Activated CD4-positive, alpha-beta memory T cell treated with anti-CD3 and anti-CD28 coated beads for 36 hours (primary cell): ENCODE measurements at regions of chr16 and their contacts with region 1.

Region 1: GRCh38 chr16:30657866-30658730 is at the start of gene FBRS:
- DNase-seq: peak; percentile 100
- H3K4me3 Mint-ChIP-seq: peak within 1 kb of the TSS; percentile 96
- H3K27ac Mint-ChIP-seq: peak within 1 kb of the TSS; percentile 100
- H3K4me1 Mint-ChIP-seq: peaks cover 38% of the 10 kb centered on the region
- H3K27me3 Mint-ChIP-seq: no peaks in the 10 kb centered on the region
- total RNA-seq, gene FBRS: 91.8 to 95.6 TPM

Region 2: GRCh38 chr16:30557957-30558788 is 99.9 kb before region 1 on chr16 and contains the start of gene ZNF764:
- CTCF ChIA-PET with region 1: no interaction called
- POLR2A ChIA-PET with region 1: no interaction called
- intact Hi-C with region 1: loop called (anchors 1 kb)
- DNase-seq: peak; percentile 99
- H3K4me3 Mint-ChIP-seq: peak within 1 kb of the TSS; percentile 89
- H3K27ac Mint-ChIP-seq: peak within 1 kb of the TSS; percentile 96
- H3K4me1 Mint-ChIP-seq: peaks cover 38% of the 10 kb centered on the region
- H3K27me3 Mint-ChIP-seq: no peaks in the 10 kb centered on the region
- total RNA-seq, gene ZNF764: 13.7 to 14.2 TPM

Region 3: GRCh38 chr16:30628627-30629540 is 29.2 kb before region 1 on chr16:
- CTCF ChIA-PET with region 1: interaction called, 8 read pairs
- POLR2A ChIA-PET with region 1: interaction called, 9 read pairs
- intact Hi-C with region 1: loop called (anchors 1 kb)
- DNase-seq: peak; percentile 94
- H3K4me3 Mint-ChIP-seq: peak overlapping the region; percentile 60
- H3K27ac Mint-ChIP-seq: peak overlapping the region; percentile 57
- H3K4me1 Mint-ChIP-seq: peaks cover 4% of the 10 kb centered on the region
- H3K27me3 Mint-ChIP-seq: no peaks in the 10 kb centered on the region

Region 4: DNA sequence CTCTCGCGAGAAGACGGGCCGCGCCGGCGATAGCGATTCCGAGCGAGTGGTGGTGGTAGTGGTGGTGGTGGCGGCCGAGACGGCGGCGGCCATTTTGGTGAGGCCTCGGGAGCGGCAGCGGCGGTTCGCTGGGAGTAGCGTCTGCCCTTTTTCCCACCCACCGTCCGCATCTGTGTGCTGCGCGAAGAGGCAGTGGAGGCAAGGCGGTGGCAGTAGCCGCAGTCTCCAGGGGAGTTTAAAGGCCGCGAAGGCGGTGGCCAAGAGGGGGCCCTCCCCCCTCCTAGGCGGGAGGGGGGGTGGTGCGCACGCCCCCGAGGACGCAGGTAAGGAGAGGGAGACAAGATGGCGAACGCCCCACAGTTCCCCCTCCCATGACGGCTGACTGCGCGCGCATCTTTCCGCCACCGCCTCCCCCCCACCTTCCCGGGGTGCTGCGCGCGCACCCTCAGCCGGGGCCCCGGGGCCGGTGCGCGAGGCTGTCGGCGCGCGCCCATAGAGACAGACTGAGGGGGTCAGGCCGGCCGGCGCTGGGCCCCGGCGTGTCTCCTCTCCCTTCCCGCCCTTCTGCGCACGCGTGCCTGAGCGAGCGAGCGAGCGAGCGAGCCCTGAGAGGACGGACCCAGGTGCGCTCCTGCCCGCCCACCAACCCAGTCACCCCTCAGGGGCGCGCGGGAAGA is 40.2 kb after region 1 on chr16:
- CTCF ChIA-PET with region 1: interaction called, 86 read pairs
- POLR2A ChIA-PET with region 1: interaction called, 13 read pairs
- intact Hi-C with region 1: loop called (anchors 1 kb)
- DNase-seq: peak; percentile 99
- H3K4me3 Mint-ChIP-seq: peak overlapping the region; percentile 96
- H3K27ac Mint-ChIP-seq: peak overlapping the region; percentile 99
- H3K4me1 Mint-ChIP-seq: peaks cover 29% of the 10 kb centered on the region
- H3K27me3 Mint-ChIP-seq: no peaks in the 10 kb centered on the region

Region 5: GRCh38 chr16:30761928-30762810 is 104.1 kb after region 1 on chr16 and contains the starts of genes CFAP119 and RNF40:
- CTCF ChIA-PET with region 1: no interaction called
- POLR2A ChIA-PET with region 1: no interaction called
- intact Hi-C with region 1: loop called (anchors 5 kb)
- DNase-seq: peak; percentile 96
- H3K4me3 Mint-ChIP-seq: peak within 1 kb of the TSS; percentile 93
- H3K27ac Mint-ChIP-seq: peak within 1 kb of the TSS; percentile 81
- H3K4me1 Mint-ChIP-seq: peaks cover 25% of the 10 kb centered on the region
- H3K27me3 Mint-ChIP-seq: no peaks in the 10 kb centered on the region
- total RNA-seq, gene CFAP119: 3.8 to 4.9 TPM
- total RNA-seq, gene RNF40: 70.9 to 72.8 TPM

Region 6: DNA sequence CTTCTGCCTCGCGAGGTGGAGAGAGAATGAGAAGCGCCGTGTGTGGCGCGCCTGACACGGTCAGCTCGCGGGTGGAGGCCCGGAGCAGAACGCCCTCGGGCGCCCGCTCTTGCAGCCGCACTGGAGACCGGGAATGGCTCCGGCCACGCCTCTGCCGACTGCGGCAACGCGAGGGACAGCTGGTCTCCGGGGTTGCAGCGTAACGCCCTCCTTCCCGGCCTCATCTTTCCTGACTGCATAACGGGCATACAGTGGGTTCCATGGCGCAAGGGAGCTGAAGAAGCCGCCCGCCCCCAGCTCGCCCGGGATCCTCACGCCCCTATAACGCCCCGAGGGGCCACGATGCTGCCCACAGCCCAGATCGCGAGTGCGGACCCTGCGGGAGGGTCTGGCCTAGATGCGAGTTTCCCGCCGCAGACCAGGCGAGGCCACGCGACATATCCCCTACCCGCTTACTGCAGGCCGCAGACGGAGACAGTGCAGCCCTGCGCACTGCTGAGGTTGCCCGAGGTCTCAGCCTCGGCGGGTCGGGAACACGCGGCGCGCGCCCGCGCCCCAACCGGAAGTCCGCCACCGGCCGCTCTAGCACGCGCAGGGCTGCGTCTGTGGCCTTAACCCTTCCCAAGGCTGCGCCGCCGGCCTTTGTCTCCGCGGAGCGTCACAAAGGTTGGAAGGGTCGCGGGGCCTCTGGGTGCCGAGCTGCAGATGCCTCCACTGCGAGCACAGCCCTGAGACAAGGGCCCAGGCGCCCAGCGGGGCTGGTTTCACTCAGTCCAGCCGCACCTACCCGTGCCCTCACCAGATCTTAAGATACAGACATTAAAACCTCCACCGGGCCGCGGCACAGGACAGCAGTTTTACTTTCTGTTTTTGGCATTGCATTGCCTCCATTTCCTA is 217.0 kb after region 1 on chr16:
- CTCF ChIA-PET with region 1: no interaction called
- POLR2A ChIA-PET with region 1: no interaction called
- intact Hi-C with region 1: loop called (anchors 10 kb)
- DNase-seq: peak; percentile 93
- H3K4me3 Mint-ChIP-seq: peak overlapping the region; percentile 96
- H3K27ac Mint-ChIP-seq: peak overlapping the region; percentile 90
- H3K4me1 Mint-ChIP-seq: peaks cover 34% of the 10 kb centered on the region
- H3K27me3 Mint-ChIP-seq: no peaks in the 10 kb centered on the region